ENCODE measurements at regions of chr5 and their contacts with region 1.

Region 1: GRCh38 chr5:16791036-16791705 is 144.9 kb downstream of the MYO10 start:
- DNase-seq: no peak
- H3K4me3 ChIP-seq: peak overlapping the region in 1 of 4 donors; percentile 12
- H3K27ac ChIP-seq: no peak overlapping the region
- H3K4me1 ChIP-seq: peaks cover 0 to 4% (median 0%) of the 10 kb centered on the region in 4 donors
- H3K27me3 ChIP-seq: no peaks in the 10 kb centered on the region
- CTCF ChIP-seq: peak; percentile 54 to 71 (median 68)
- EP300 ChIP-seq: no peak
- POLR2A ChIP-seq: no peak

Region 2: GRCh38 chr5:16727755-16728325 is 63.3 kb before region 1 on chr5:
- intact Hi-C with region 1: no loop called
- DNase-seq: no peak
- H3K4me3 ChIP-seq: no peak overlapping the region
- H3K27ac ChIP-seq: no peak overlapping the region
- H3K4me1 ChIP-seq: peaks cover 4 to 9% (median 8%) of the 10 kb centered on the region in 4 donors
- H3K27me3 ChIP-seq: peaks cover 0 to 4% (median 0%) of the 10 kb centered on the region in 4 donors
- CTCF ChIP-seq: no peak
- EP300 ChIP-seq: no peak
- POLR2A ChIP-seq: no peak

Region 3: GRCh38 chr5:17189381-17190036 is 398.3 kb after region 1 on chr5:
- intact Hi-C with region 1: loop called (anchors 2 kb)
- DNase-seq: peak; percentile 94
- H3K4me3 ChIP-seq: no peak overlapping the region
- H3K27ac ChIP-seq: no peak overlapping the region
- H3K4me1 ChIP-seq: peaks cover 3 to 15% (median 10%) of the 10 kb centered on the region in 4 donors
- H3K27me3 ChIP-seq: peaks cover 0 to 10% (median 0%) of the 10 kb centered on the region in 4 donors
- CTCF ChIP-seq: peak; percentile 45 to 73 (median 66)
- EP300 ChIP-seq: no peak
- POLR2A ChIP-seq: no peak